ENCODE measurements at regions of chr1 and their contacts with region 1.

Region 1: DNA sequence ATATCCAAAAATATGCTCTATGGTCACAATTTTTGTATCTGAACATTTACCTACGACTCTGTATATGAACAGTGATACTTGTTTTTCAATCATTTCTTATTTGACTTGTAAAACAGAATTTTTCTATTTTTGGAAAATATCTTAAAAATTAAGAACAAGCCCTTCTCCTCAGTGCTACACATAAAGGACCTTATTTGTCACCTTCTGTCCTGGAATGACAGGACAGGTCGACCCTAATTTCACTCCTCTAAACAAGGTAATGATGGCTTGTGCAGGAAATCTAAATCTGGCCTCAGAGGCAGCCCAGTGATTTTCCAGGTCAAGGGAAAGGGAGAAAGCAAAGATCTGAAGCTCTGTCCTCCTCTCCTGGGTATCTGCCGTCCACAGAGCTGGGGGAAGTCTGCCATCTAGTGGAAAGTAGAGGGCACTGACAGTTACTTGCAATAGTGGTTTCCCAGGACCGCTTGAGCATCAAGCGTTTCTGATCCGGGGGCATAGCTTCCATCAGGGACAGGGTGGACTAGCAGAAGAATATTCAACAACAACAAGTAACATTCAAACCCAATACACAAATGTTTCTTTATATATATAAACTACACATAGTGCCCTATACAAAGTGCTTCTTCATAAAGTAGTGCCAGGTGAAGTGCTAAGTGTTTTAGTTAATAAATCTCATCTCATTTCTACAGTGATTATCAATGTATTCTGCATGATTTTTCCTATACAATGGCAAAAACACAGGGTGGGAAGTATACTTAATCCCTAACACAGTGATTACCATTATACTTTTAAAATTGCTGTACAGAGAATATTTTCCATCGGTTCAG is 74.6 kb downstream of the SLC25A24 start:
- DNase-seq: peak; percentile 82
- H3K4me3 Mint-ChIP-seq: no peak overlapping the region
- H3K27ac Mint-ChIP-seq: no peak overlapping the region
- H3K4me1 Mint-ChIP-seq: no peaks in the 10 kb centered on the region
- H3K27me3 Mint-ChIP-seq: peaks cover 14% of the 10 kb centered on the region
- CTCF ChIP-seq: peak; percentile 90

Region 2: GRCh38 chr1:107795441-107795840 is 330.1 kb before region 1 on chr1:
- CTCF ChIA-PET with region 1: interaction called, 14 read pairs
- POLR2A ChIA-PET with region 1: no interaction called
- intact Hi-C with region 1: no loop called
- DNase-seq: no peak
- H3K4me3 Mint-ChIP-seq: no peak overlapping the region
- H3K27ac Mint-ChIP-seq: no peak overlapping the region
- H3K4me1 Mint-ChIP-seq: no peaks in the 10 kb centered on the region
- H3K27me3 Mint-ChIP-seq: no peaks in the 10 kb centered on the region
- CTCF ChIP-seq: no peak

Region 3: GRCh38 chr1:107897438-107898345 is 227.8 kb before region 1 on chr1:
- CTCF ChIA-PET with region 1: interaction called, 10 read pairs
- POLR2A ChIA-PET with region 1: no interaction called
- intact Hi-C with region 1: loop called (anchors 1 kb)
- DNase-seq: no peak
- H3K4me3 Mint-ChIP-seq: no peak overlapping the region
- H3K27ac Mint-ChIP-seq: no peak overlapping the region
- H3K4me1 Mint-ChIP-seq: no peaks in the 10 kb centered on the region
- H3K27me3 Mint-ChIP-seq: no peaks in the 10 kb centered on the region
- CTCF ChIP-seq: no peak

Region 4: DNA sequence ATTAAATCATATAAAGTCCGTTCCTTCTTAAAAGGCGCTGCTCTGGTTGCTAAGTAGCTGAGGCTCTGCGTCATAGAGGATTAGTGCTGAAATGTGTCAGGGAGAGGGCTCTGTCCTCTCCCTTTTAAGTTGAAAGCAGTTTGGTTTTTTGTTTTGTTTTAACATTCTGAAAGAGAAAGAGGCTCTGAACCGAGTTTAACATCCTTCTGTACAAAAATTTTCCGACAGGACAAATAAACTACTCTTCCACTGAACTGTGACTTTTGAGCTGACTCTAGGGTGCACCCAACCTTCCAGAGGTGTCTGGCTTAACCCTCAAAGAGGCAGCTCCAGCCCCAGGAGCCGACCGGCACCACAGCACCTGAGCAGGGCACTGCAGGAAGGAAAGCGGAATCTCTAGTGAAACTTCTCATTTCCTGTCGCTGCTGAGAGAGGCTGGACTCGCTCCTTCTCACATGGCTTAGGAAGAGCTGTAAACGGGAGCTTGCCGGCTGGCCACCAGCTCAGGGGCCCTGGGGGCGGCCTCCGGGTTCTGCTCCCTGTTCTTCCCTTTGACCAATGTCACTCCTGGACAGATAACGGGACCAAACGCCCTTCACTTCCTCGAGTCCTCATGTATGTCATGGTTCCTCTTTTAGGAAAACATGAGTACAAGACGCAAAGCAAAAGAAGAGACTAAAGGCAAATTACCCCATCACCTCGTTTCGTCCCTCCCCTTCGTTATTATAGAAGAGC is 161.8 kb before region 1 on chr1:
- CTCF ChIA-PET with region 1: interaction called, 8 read pairs
- POLR2A ChIA-PET with region 1: interaction called, 4 read pairs
- intact Hi-C with region 1: loop called (anchors 10 kb)
- DNase-seq: no peak
- H3K4me3 Mint-ChIP-seq: peak overlapping the region; percentile 64
- H3K27ac Mint-ChIP-seq: no peak overlapping the region
- H3K4me1 Mint-ChIP-seq: peaks cover 13% of the 10 kb centered on the region
- H3K27me3 Mint-ChIP-seq: peaks cover 10% of the 10 kb centered on the region
- CTCF ChIP-seq: no peak

Region 5: DNA sequence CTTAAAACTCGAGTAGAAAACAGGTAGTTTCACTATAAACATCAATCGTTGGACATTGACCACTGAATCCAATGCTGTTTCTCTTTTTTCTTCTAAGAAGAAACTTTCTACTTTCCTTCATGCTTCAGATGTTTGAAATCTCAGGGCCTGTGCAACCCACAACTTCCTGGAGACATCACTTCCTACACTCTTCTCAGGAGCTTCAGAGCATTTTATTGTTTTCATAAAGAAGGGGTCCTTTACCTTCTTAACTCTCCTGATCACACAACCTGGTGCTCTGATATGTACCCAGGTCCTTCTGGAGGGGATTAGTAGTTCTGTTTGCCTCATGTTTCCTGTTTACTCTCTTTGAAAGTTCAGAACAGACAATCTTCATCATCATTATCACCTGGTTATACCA is 47.5 kb before region 1 on chr1:
- CTCF ChIA-PET with region 1: no interaction called
- POLR2A ChIA-PET with region 1: no interaction called
- intact Hi-C with region 1: no loop called
- DNase-seq: no peak
- H3K4me3 Mint-ChIP-seq: no peak overlapping the region
- H3K27ac Mint-ChIP-seq: no peak overlapping the region
- H3K4me1 Mint-ChIP-seq: no peaks in the 10 kb centered on the region
- H3K27me3 Mint-ChIP-seq: no peaks in the 10 kb centered on the region
- CTCF ChIP-seq: no peak

Region 6: DNA sequence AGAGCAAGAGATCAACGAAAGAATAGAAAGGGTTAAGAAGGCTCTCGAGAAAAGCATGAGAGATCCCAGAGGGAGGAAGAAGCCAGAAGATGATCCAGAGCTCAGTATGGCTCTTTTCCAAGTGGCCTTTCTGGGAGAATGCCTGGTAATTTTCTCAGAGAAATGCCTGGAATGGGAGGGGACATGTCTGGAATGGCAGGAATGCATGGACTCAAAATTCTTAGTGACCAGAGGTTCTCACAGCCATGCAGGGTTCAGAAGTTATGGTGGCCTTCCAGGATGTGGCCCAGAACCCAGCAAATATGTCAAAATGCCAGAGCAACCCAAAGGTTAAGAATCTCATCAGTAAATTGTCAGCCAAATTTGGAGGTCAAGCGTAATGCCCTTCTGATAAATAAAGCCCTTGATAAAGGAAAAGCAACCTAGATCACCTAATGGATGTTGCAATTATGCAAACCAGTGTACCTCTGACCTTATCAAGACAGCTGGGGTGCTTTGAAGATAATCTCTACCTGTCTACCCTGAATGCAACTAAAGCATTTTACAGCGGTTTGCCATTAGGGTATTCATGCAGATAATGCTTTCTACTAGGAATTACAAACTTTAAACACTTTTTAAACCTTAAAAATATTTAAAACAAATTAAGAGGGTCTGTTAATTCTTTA is 377.7 kb after region 1 on chr1:
- CTCF ChIA-PET with region 1: no interaction called
- POLR2A ChIA-PET with region 1: no interaction called
- intact Hi-C with region 1: loop called (anchors 10 kb)
- DNase-seq: peak; percentile 43
- H3K4me3 Mint-ChIP-seq: no peak overlapping the region
- H3K27ac Mint-ChIP-seq: no peak overlapping the region
- H3K4me1 Mint-ChIP-seq: peaks cover 13% of the 10 kb centered on the region
- H3K27me3 Mint-ChIP-seq: no peaks in the 10 kb centered on the region
- CTCF ChIP-seq: no peak